Naive thymus-derived CD4-positive, alpha-beta T cell (primary cell): ENCODE measurements at regions of chr1 and their contacts with region 1.

Region 1: DNA sequence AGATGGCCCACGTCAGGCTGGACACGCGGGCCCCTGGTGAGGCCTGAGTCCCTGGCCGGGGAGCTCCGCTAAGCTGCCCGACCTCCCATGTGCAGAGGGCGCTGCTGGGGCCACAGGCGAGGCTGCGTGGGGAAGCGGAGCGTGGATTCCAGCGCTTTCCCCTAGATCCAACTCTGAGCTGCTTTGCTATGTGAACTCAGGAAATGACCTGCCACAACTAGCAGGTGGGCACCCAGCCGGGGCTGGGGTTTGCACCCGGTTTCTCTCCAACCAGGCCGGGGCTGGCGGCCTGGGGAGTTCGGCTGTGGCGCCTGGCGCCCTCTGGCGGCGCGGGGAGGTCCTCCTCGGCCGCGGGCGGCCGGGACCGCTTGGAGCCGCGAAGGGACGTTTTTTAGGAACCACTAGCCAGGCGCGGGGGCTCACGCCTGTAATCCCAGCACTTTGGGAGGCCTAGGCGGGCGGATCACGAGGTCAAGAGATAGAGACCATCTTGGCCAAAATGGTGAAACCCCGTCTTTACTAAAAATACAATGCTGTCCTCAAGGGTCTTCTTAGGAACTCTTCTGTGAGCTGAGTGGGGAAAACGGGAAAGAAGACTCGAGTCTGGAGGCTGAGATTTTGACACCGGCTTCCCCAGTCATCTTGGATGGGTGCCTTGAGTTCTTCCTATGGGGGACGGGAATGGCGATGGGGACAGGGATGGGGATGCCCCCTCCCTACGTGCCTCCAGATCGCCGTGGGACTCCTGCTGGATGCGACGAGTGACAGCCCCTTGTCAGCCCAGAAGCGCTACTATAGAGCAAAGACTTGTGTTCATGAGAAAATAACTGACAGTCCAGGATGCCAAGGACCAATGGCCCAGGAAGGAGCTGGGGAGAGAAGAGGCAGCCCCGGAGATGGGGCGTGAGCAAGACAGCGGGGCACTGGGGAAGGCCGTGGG is 12.6 kb downstream of the PYCR2 start:
- DNase-seq: peak; percentile 59 to 87 (median 75)
- ATAC-seq: peak; percentile 88
- H3K4me3 ChIP-seq: no peak overlapping the region
- H3K4me3 Mint-ChIP-seq: peak overlapping the region in 4 of 10 donors; percentile 5 to 51 (median 24)
- H3K27ac ChIP-seq: peak overlapping the region; percentile 34
- H3K27ac Mint-ChIP-seq: peak overlapping the region in 7 of 9 donors; percentile 45 to 80 (median 68)
- H3K4me1 ChIP-seq: peaks cover 11 to 28% of the 10 kb centered on the region in 2 donors
- H3K4me1 Mint-ChIP-seq: peaks cover 18 to 53% (median 35%) of the 10 kb centered on the region in 7 donors
- H3K27me3 ChIP-seq: no peaks in the 10 kb centered on the region
- H3K27me3 Mint-ChIP-seq: peaks cover 0 to 5% (median 0%) of the 10 kb centered on the region in 5 donors

Region 2: GRCh38 chr1:225554216-225554812 is 357.1 kb before region 1 on chr1:
- CTCF ChIA-PET with region 1: no interaction called
- POLR2A ChIA-PET with region 1: no interaction called
- intact Hi-C with region 1: loop called in 1 of 2 experiments (anchors 1 kb)
- DNase-seq: peak in 5 of 9 donors; percentile 25 to 34 (median 30)
- ATAC-seq: peak; percentile 54
- H3K4me3 ChIP-seq: no peak overlapping the region
- H3K4me3 Mint-ChIP-seq: no peak overlapping the region
- H3K27ac ChIP-seq: no peak overlapping the region
- H3K27ac Mint-ChIP-seq: no peak overlapping the region
- H3K4me1 ChIP-seq: no peaks in the 10 kb centered on the region
- H3K4me1 Mint-ChIP-seq: no peaks in the 10 kb centered on the region
- H3K27me3 ChIP-seq: no peaks in the 10 kb centered on the region
- H3K27me3 Mint-ChIP-seq: peaks cover 0 to 16% (median 5%) of the 10 kb centered on the region in 5 donors

Region 3: GRCh38 chr1:225866061-225866837 is 45.2 kb before region 1 on chr1:
- CTCF ChIA-PET with region 1: no interaction called
- POLR2A ChIA-PET with region 1: interaction called, 4 read pairs
- intact Hi-C with region 1: loop called (anchors 1 to 2 kb)
- DNase-seq: peak in 8 of 9 donors; percentile 58 to 78 (median 68)
- ATAC-seq: peak; percentile 91
- H3K4me3 ChIP-seq: no peak overlapping the region
- H3K4me3 Mint-ChIP-seq: peak overlapping the region; percentile 44 to 80 (median 66)
- H3K27ac ChIP-seq: peak overlapping the region; percentile 68
- H3K27ac Mint-ChIP-seq: peak overlapping the region; percentile 68 to 94 (median 85)
- H3K4me1 ChIP-seq: peaks cover 25 to 32% of the 10 kb centered on the region in 2 donors
- H3K4me1 Mint-ChIP-seq: peaks cover 36 to 58% (median 51%) of the 10 kb centered on the region in 7 donors
- H3K27me3 ChIP-seq: no peaks in the 10 kb centered on the region
- H3K27me3 Mint-ChIP-seq: no peaks in the 10 kb centered on the region

Region 4: GRCh38 chr1:225888898-225889601 is 22.4 kb before region 1 on chr1 and contains the start of gene LEFTY1:
- CTCF ChIA-PET with region 1: interaction called, 46 read pairs
- POLR2A ChIA-PET with region 1: interaction called, 11 read pairs
- intact Hi-C with region 1: no loop called
- DNase-seq: no peak
- ATAC-seq: peak; percentile 14
- H3K4me3 ChIP-seq: no peak within 1 kb of the TSS
- H3K4me3 Mint-ChIP-seq: no peak within 1 kb of the TSS
- H3K27ac ChIP-seq: no peak within 1 kb of the TSS
- H3K27ac Mint-ChIP-seq: peak within 1 kb of the TSS in 6 of 9 donors; percentile 28 to 66 (median 60)
- H3K4me1 ChIP-seq: peaks cover 0 to 5% of the 10 kb centered on the region in 2 donors
- H3K4me1 Mint-ChIP-seq: peaks cover 1 to 32% (median 14%) of the 10 kb centered on the region in 7 donors
- H3K27me3 ChIP-seq: no peaks in the 10 kb centered on the region
- H3K27me3 Mint-ChIP-seq: peaks cover 0 to 37% (median 0%) of the 10 kb centered on the region in 5 donors
- total RNA-seq, gene LEFTY1: 0.84 to 0.85 TPM in 2 of 5 experiments, not detected in the others

Region 5: GRCh38 chr1:225923692-225924555 is 12.5 kb after region 1 on chr1 and contains the start of gene PYCR2:
- CTCF ChIA-PET with region 1: interaction called, 4 read pairs
- POLR2A ChIA-PET with region 1: interaction called, 13 read pairs
- intact Hi-C with region 1: loop called in 1 of 2 experiments (anchors 2 kb)
- DNase-seq: peak; percentile 92 to 97 (median 94)
- ATAC-seq: peak; percentile 99
- H3K4me3 ChIP-seq: peak within 1 kb of the TSS; percentile 100
- H3K4me3 Mint-ChIP-seq: peak within 1 kb of the TSS; percentile 86 to 98 (median 94)
- H3K27ac ChIP-seq: peak within 1 kb of the TSS; percentile 95
- H3K27ac Mint-ChIP-seq: peak within 1 kb of the TSS; percentile 90 to 98 (median 95)
- H3K4me1 ChIP-seq: peaks cover 11 to 65% of the 10 kb centered on the region in 2 donors
- H3K4me1 Mint-ChIP-seq: peaks cover 45 to 75% (median 60%) of the 10 kb centered on the region in 7 donors
- H3K27me3 ChIP-seq: no peaks in the 10 kb centered on the region
- H3K27me3 Mint-ChIP-seq: no peaks in the 10 kb centered on the region
- total RNA-seq, gene PYCR2: 46.4 to 137 (median 109) TPM